ENCODE measurements at regions of chr19 and their contacts with region 1.

Region 1: DNA sequence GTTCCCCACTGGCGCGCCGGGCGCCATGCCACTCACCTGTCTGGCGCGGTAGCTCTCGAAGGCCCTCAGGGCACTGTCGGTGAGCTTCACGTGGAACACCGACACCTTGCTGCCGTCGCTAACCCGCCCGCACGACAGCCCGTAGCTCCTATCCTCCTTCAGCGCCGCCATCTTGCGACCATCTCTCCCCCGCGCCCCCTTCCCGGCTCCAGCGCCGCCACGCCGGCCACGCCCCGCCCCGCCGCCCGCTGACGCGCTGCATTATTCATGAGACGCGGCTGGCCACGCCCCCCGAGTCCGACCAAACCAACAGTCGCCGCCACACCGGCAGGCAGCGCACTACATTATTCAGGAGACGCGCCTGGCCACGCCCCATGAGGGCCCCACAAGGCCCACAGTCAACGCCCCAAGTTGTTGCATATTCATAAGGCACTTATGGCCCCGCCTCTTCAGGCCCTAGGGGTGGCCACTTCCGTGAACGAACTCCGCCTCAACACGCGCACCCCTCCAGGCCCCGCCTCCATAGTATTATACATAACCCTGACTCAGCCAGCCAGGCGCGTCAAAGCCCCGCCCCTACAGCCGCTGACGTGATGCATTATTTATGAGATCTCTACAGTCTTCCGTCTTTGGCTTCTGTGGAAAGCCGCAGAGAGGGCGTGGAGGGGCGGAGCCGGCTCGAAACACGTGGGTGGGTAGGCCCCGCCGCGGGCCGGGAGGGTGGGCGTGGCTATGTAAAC is at the start of gene ELL:
- DNase-seq: peak; percentile 100
- H3K4me3 Mint-ChIP-seq: peak within 1 kb of the TSS; percentile 99
- H3K27ac Mint-ChIP-seq: peak within 1 kb of the TSS; percentile 93
- H3K4me1 Mint-ChIP-seq: peaks cover 12% of the 10 kb centered on the region
- H3K27me3 Mint-ChIP-seq: no peaks in the 10 kb centered on the region
- total RNA-seq, gene ELL: 23.6 and 24.1 TPM in 2 replicates

Region 2: GRCh38 chr19:18203863-18204393 is 318.1 kb before region 1 on chr19 and contains the start of gene RAB3A:
- intact Hi-C with region 1: loop called (anchors 1 kb)
- DNase-seq: peak; percentile 99
- H3K4me3 Mint-ChIP-seq: peak within 1 kb of the TSS; percentile 95
- H3K27ac Mint-ChIP-seq: peak within 1 kb of the TSS; percentile 86
- H3K4me1 Mint-ChIP-seq: peaks cover 18% of the 10 kb centered on the region
- H3K27me3 Mint-ChIP-seq: peaks cover 4% of the 10 kb centered on the region
- total RNA-seq, gene RAB3A: 7.2 and 11.0 TPM in 2 replicates

Region 3: DNA sequence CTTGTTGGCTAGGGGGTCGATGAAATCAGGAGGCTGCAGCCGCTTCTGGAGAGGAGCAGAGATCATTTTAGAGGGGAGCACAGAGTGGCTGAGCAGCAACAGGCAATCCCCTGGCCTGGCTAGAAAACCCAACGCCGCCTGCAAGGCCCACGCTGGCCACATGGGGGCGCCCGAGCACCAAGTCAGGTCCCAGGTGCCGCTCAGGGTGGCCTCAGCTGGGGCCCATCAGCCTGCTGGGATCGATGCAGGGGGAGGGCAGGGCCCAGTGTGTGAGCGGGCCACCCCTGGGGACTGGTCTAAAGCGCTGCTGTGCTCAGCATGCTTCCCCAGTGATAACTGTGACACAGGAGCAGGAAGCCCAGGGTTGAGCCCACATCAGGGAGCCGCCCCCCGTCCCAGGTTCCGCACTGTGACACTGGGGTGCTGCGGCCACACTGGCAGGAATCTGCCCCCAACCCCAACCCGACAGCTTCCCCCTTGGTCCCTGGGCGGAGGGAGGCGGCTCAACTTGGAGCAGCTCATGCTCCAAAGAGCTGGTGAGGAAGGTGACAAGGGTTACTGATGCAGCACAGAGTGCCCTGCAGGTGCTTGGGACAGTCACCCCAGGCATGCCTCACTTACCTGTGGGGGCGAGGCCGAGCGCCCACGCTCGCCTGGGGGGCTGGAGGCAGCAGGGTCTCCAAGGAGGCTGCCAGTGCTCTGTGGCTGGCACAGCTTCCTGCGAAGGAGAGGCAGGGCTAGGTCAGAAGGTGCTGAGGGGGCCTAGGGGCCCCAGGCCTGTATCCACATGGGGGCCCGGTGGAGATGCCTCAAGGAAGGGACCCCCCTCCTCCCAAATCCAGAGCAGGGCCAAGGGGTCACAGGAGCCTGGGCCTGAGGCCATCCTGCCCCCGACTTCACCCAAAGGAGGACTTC is 70.9 kb before region 1 on chr19:
- intact Hi-C with region 1: loop called (anchors 1 kb)
- DNase-seq: peak; percentile 78
- H3K4me3 Mint-ChIP-seq: no peak overlapping the region
- H3K27ac Mint-ChIP-seq: no peak overlapping the region
- H3K4me1 Mint-ChIP-seq: no peaks in the 10 kb centered on the region
- H3K27me3 Mint-ChIP-seq: no peaks in the 10 kb centered on the region

Region 4: GRCh38 chr19:18496167-18496979 is 25.7 kb before region 1 on chr19:
- intact Hi-C with region 1: loop called (anchors 1 kb)
- DNase-seq: peak; percentile 56
- H3K4me3 Mint-ChIP-seq: peak overlapping the region; percentile 64
- H3K27ac Mint-ChIP-seq: peak overlapping the region; percentile 80
- H3K4me1 Mint-ChIP-seq: peaks cover 63% of the 10 kb centered on the region
- H3K27me3 Mint-ChIP-seq: no peaks in the 10 kb centered on the region

Region 5: DNA sequence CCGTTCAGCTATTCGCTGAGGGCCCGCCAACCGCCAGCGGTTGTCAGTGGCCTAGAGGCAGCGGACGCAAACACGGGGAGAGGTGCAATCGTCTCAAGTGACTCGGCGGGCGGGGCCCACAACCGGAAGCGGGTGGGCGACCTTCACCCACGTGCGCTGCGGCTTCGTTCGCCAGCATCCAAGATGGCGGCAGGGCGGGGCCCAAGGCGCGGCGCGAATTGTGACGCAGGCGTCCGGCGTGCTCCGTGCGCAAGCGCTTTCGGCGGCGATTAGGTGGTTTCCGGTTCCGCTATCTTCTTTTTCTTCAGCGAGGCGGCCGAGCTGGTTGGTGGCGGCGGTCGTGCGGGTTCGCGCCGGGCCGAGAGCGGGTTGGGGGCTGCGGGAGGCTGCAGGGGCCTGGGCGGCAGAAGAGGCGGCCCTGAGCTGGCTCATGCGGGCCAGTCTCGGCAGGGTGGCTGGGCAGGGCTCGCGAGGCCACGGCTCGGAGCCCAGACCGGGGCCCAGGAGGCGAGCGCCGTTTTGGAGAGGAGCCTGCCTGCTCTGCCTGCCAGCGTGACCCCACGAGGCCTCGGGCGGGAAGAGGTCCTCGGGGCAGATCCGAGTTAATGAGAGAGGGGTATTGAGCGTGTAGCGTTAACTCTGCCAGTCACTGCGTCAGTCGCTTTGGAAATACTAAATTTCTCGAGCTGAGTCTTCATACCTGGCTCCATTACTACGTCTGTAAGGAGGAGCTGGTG is 49.7 kb after region 1 on chr19 and contains the start of gene UBA52:
- intact Hi-C with region 1: loop called (anchors 1 kb)
- DNase-seq: peak; percentile 99
- H3K4me3 Mint-ChIP-seq: peak within 1 kb of the TSS; percentile 91
- H3K27ac Mint-ChIP-seq: peak within 1 kb of the TSS; percentile 98
- H3K4me1 Mint-ChIP-seq: peaks cover 27% of the 10 kb centered on the region
- H3K27me3 Mint-ChIP-seq: no peaks in the 10 kb centered on the region
- total RNA-seq, gene UBA52: 1,472 and 1,500 TPM in 2 replicates

Region 6: GRCh38 chr19:18831524-18832305 is 309.7 kb after region 1 on chr19 and contains the start of gene UPF1:
- intact Hi-C with region 1: loop called (anchors 1 kb)
- DNase-seq: peak; percentile 96
- H3K4me3 Mint-ChIP-seq: peak within 1 kb of the TSS; percentile 96
- H3K27ac Mint-ChIP-seq: peak within 1 kb of the TSS; percentile 95
- H3K4me1 Mint-ChIP-seq: peaks cover 35% of the 10 kb centered on the region
- H3K27me3 Mint-ChIP-seq: peaks cover 14% of the 10 kb centered on the region
- total RNA-seq, gene UPF1: 102 and 113 TPM in 2 replicates

Region 7: DNA sequence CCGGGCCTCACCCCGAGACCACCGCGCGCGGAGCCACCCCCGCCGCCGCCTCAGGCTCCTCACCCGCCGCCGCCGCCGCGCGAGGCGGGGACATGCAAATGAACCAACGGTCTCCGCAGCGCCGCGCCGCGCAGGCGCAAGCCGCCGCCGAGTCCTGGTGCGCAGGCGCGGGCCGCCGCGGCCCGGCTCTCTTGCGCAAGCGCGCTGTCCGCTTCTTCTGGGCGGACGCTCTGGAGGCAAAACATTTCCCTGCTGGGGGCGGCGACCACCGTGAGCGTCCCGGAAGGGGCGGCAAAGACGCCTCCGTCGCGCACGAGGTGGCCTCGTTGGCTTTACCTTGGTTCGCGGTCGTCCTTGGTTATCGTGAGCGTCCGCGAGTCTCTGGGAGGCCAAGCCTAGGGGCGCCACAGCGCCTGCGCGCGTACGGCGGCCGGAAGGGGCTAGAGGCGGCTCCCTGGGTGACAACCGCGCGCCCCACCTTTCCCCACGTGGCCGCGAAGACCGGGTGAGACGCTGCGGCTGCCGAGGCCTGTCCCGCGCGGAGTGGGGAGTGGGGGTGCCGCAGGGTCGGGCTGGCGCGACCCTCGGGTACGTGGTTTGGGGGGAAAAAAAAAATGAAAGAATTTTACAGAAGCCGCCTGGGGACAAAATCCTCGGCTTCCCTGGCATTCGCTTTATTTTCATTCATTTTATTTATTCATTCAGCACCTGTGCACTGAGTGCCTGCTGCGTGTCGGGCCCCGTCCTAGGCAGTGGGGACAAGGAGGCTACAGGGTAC is 511.6 kb after region 1 on chr19 and contains the starts of genes ARMC6 and SUGP2:
- intact Hi-C with region 1: loop called (anchors 1 kb)
- DNase-seq: peak; percentile 89
- H3K4me3 Mint-ChIP-seq: peak within 1 kb of the TSS; percentile 98
- H3K27ac Mint-ChIP-seq: peak within 1 kb of the TSS; percentile 98
- H3K4me1 Mint-ChIP-seq: peaks cover 25% of the 10 kb centered on the region
- H3K27me3 Mint-ChIP-seq: no peaks in the 10 kb centered on the region
- total RNA-seq, gene ARMC6: 54.9 and 56.5 TPM in 2 replicates
- total RNA-seq, gene SUGP2: 114 and 128 TPM in 2 replicates

Measured in activated T-helper 1 cell treated with anti-CD3 and anti-CD28 coated beads, Interleukin-12 subunit alpha, Interleukin-12 subunit beta, Interleukin-2, Interleukin-4 antibody, amounts not matched to agents 30 ng/mL and 10 ng/mL and 1 ng/mL, durations not matched to agents 14 hours and 24 hours and 36 hours (primary cell).